ENCODE measurements at regions of chr9 and their contacts with region 1.

Region 1: DNA sequence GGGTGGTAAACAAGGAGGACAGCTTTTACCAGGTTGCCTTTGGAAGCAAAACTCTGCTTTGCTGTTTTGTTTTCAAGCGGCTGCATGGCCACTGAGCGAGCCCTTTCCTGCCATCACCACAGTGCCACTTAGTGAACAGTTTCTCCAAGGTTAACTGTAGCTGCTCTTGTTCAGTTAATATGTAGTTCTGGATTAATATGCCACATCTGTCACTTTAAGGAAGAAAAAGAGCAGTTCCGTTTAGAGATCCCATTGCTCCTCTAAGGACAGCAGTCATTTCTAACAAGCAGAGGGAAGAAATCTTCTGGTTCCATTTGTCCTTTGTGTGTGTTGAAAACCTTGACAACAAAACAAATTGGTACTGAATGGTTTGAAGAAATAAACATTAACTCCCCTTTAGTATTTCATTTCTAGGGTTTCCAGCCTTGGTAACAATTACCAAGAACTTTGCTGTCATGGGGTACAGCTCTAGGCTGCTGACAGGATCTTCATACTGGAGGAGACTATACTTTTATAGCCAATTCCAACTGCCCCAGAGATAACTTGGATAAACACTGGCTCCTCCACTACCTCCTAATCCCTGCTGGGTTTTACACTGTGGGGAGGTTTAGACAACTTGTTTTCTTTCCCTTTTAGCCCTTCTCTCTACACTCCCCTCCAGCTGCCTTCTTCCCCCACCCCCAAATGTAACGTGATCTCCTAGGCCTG is 10.3 kb upstream of the ABL1 start:
- DNase-seq: peak; percentile 87
- H3K4me3 ChIP-seq: peak overlapping the region; percentile 15
- H3K27ac ChIP-seq: peak overlapping the region; percentile 88
- H3K4me1 ChIP-seq: peaks cover 38% of the 10 kb centered on the region
- H3K27me3 ChIP-seq: no peaks in the 10 kb centered on the region
- CTCF ChIP-seq: no peak

Region 2: GRCh38 chr9:130805510-130806326 is 19.1 kb before region 1 on chr9:
- CTCF ChIA-PET with region 1: no interaction called
- POLR2A ChIA-PET with region 1: interaction called, 12 read pairs
- intact Hi-C with region 1: no loop called
- DNase-seq: no peak
- H3K4me3 ChIP-seq: no peak overlapping the region
- H3K27ac ChIP-seq: peak overlapping the region; percentile 11
- H3K4me1 ChIP-seq: peaks cover 18% of the 10 kb centered on the region
- H3K27me3 ChIP-seq: no peaks in the 10 kb centered on the region
- CTCF ChIP-seq: no peak

Region 3: GRCh38 chr9:130884980-130885696 is 60.3 kb after region 1 on chr9:
- CTCF ChIA-PET with region 1: no interaction called
- POLR2A ChIA-PET with region 1: no interaction called
- intact Hi-C with region 1: no loop called
- DNase-seq: no peak
- H3K4me3 ChIP-seq: no peak overlapping the region
- H3K27ac ChIP-seq: no peak overlapping the region
- H3K4me1 ChIP-seq: no peaks in the 10 kb centered on the region
- H3K27me3 ChIP-seq: no peaks in the 10 kb centered on the region
- CTCF ChIP-seq: no peak

Region 4: GRCh38 chr9:131567910-131568309 is 743.1 kb after region 1 on chr9:
- CTCF ChIA-PET with region 1: no interaction called
- POLR2A ChIA-PET with region 1: no interaction called
- intact Hi-C with region 1: no loop called
- DNase-seq: no peak
- H3K4me3 ChIP-seq: no peak overlapping the region
- H3K27ac ChIP-seq: no peak overlapping the region
- H3K4me1 ChIP-seq: no peaks in the 10 kb centered on the region
- H3K27me3 ChIP-seq: no peaks in the 10 kb centered on the region
- CTCF ChIP-seq: no peak

Measured in A673 (cell line).